Activated CD4-positive, alpha-beta T cell treated with anti-CD3 and anti-CD28 coated beads for 36 hours (primary cell): ENCODE measurements at regions of chr13 and their contacts with region 1.

Region 1: DNA sequence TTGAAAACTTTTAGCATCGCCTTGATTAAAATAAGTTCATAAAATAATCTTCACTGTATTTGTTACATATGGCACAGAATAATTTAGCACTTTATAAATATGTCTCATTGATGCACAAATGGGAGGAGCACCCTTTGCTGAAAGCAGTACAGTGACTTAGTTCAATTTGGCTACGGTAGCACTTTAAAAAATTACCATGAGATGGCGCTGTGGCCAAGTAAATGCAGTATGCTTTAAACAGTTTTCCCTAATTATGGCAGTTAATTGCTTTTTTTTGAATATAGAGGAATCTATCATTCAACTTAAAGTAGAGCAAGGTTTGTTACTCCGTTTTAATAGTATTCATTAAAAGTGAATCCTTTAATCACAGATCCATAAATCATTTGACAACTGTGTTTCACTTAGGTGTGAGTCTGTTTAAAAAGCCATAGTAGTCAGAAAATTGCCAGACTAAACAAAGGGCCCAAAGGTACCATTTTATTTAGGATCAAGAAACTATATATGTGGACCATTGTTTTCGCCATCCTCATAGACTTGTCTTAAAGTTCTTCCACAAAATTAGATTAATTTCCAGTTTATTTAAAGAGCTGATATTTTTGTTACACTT is 34.7 kb upstream of the ESD start:
- DNase-seq: peak; percentile 53
- ATAC-seq: peak; percentile 51
- H3K4me3 Mint-ChIP-seq: no peak overlapping the region
- H3K27ac Mint-ChIP-seq: no peak overlapping the region
- H3K4me1 Mint-ChIP-seq: no peaks in the 10 kb centered on the region
- H3K27me3 Mint-ChIP-seq: peaks cover 2% of the 10 kb centered on the region

Region 2: GRCh38 chr13:46817095-46817494 is 14.6 kb before region 1 on chr13:
- CTCF ChIA-PET with region 1: interaction called, 10 read pairs
- POLR2A ChIA-PET with region 1: no interaction called
- intact Hi-C with region 1: no loop called
- DNase-seq: no peak
- ATAC-seq: no peak
- H3K4me3 Mint-ChIP-seq: no peak overlapping the region
- H3K27ac Mint-ChIP-seq: no peak overlapping the region
- H3K4me1 Mint-ChIP-seq: peaks cover 4% of the 10 kb centered on the region
- H3K27me3 Mint-ChIP-seq: peaks cover 7% of the 10 kb centered on the region

Region 3: GRCh38 chr13:47519626-47520025 is 687.9 kb after region 1 on chr13:
- CTCF ChIA-PET with region 1: no interaction called
- POLR2A ChIA-PET with region 1: no interaction called
- intact Hi-C with region 1: loop called in 1 of 2 experiments (anchors 5 kb)
- DNase-seq: no peak
- ATAC-seq: no peak
- H3K4me3 Mint-ChIP-seq: no peak overlapping the region
- H3K27ac Mint-ChIP-seq: no peak overlapping the region
- H3K4me1 Mint-ChIP-seq: no peaks in the 10 kb centered on the region
- H3K27me3 Mint-ChIP-seq: peaks cover under 1% of the 10 kb centered on the region

Region 4: DNA sequence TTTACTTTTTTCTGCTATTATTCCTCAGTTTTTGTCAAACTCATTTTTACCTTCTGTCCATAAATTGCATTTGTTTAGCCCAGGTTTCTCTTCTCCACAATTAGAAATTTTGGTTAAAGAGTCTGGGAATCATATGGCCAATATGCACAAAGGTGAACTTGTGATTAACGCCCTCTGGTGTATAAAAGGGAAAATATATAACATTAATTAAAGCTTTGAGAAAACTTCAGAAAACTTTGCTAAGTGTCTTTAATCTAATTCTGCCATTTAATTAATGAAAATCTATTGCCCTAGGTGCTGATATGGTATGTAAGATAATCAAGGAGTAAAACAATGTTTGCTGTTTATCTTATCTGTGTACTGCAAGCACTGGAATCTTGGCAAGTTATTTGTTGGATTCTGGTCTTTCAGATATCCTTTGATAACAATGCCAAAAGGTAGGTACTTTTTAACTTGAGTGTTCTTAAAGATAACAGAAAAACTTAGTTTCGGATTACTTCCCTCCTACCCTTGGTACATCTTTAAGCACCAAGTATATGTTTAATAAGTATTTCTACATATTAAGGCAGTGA is 766.7 kb after region 1 on chr13:
- CTCF ChIA-PET with region 1: no interaction called
- POLR2A ChIA-PET with region 1: no interaction called
- intact Hi-C with region 1: loop called in 1 of 2 experiments (anchors 2 kb)
- DNase-seq: no peak
- ATAC-seq: no peak
- H3K4me3 Mint-ChIP-seq: no peak overlapping the region
- H3K27ac Mint-ChIP-seq: no peak overlapping the region
- H3K4me1 Mint-ChIP-seq: no peaks in the 10 kb centered on the region
- H3K27me3 Mint-ChIP-seq: peaks cover 5% of the 10 kb centered on the region

Region 5: DNA sequence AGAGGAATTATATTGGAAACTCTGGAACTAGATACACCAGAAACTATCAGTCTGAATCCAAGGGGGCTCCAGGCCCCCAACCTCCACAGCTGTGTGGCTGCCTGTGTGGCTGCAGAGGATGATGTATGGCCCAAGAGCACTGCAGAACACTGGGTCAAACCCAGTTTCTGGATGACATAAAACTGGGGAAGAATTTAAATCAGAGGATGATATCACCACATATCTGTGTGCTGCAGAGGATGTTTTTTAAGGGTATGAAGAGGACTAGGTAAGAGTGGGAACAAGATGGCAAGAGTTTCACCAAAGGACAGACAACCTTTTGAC is 942.9 kb after region 1 on chr13:
- CTCF ChIA-PET with region 1: interaction called, 3 read pairs
- POLR2A ChIA-PET with region 1: no interaction called
- intact Hi-C with region 1: loop called (anchors 1 to 5 kb)
- DNase-seq: no peak
- ATAC-seq: no peak
- H3K4me3 Mint-ChIP-seq: no peak overlapping the region
- H3K27ac Mint-ChIP-seq: no peak overlapping the region
- H3K4me1 Mint-ChIP-seq: no peaks in the 10 kb centered on the region
- H3K27me3 Mint-ChIP-seq: peaks cover 2% of the 10 kb centered on the region